ENCODE measurements at regions of chr3 and their contacts with region 1.

Region 1: DNA sequence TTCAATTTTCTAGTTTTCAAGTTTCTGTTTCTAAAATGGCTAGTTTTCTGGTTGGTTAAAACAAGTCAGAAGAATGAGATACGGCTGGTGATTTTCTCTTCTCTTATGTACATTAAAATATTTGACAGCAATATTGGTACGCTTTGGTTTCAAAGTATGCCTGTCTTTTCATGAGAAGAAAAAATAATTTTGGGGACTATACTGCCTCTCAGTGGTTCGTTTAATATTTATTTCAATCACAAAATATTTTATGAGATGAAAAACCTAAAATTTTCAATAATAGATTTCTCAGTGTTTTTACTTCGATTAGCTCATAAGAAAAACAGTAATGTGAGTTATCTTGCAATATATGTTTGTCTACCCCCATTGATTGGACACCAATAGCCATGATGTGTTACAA is 72.8 kb upstream of the AADACL2 start:
- DNase-seq: no peak
- H3K4me3 ChIP-seq: no peak overlapping the region
- H3K27ac ChIP-seq: no peak overlapping the region
- H3K27me3 ChIP-seq: peaks cover 0 to 4% (median 0%) of the 10 kb centered on the region in 45 donors
- CTCF ChIP-seq: peak in 49 of 56 donors; percentile 15 to 66 (median 37)

Region 2: DNA sequence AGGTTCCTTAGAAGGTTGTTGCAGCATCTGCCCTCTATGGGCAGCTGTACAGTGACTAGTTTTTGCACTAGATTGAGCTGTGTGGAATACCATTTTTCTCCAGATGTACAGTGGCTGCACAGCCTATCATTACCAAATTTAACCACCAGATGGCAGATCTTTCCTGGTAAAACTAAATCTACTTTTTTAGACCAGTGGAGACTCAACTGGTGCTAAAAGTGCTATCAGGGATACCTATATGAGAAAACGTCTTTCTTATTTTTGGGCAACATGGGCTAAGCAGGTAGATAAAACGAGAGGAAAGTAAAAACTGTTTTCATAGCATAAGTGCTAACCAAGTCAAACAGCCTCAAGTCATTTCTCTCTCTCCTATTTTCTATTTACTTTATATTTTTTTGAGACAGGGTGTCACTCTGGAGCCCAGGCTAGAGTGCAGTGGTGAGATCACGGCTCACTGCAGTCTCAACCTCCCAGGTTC is 221.2 kb before region 1 on chr3:
- intact Hi-C with region 1: loop called (anchors 5 to 10 kb)
- DNase-seq: no peak
- H3K4me3 ChIP-seq: no peak overlapping the region
- H3K27ac ChIP-seq: no peak overlapping the region
- H3K27me3 ChIP-seq: no peaks in the 10 kb centered on the region
- CTCF ChIP-seq: peak; percentile 72 to 97 (median 92)

Region 3: DNA sequence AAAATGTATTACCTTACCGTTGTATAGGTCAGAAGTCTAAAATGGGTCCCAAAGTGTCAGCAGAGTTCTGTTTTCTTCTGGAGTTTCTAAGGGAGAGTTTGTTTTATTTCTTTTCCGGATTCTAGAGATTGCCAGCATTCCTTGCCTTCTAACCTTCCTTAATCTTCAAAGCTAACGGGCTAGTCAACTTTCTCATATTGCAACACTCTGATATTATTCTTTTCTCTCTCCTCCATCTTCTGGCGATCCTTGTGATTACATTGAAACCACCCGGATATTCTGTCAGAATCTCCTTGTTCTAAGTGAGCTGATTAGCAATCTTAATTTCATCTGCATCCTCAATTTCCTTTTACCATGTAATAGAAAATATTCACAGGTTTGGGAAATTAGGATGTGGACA is 36.6 kb after region 1 on chr3:
- intact Hi-C with region 1: no loop called
- DNase-seq: no peak
- H3K4me3 ChIP-seq: no peak overlapping the region
- H3K27ac ChIP-seq: no peak overlapping the region
- H3K27me3 ChIP-seq: peaks cover 0 to 3% (median 0%) of the 10 kb centered on the region in 45 donors
- CTCF ChIP-seq: no peak

Measured in dorsolateral prefrontal cortex (tissue), 120 donors.